Activated CD4-positive, alpha-beta T cell treated with anti-CD3 and anti-CD28 coated beads for 36 hours (primary cell): ENCODE measurements at regions of chr3 and their contacts with region 1.

Region 1: GRCh38 chr3:149969940-149970715 is 567 bp downstream of the PFN2 start:
- DNase-seq: peak; percentile 86
- ATAC-seq: peak; percentile 65
- H3K4me3 Mint-ChIP-seq: peak overlapping the region; percentile 83
- H3K27ac Mint-ChIP-seq: peak overlapping the region; percentile 51
- H3K4me1 Mint-ChIP-seq: peaks cover 14% of the 10 kb centered on the region
- H3K27me3 Mint-ChIP-seq: peaks cover 25% of the 10 kb centered on the region

Region 2: GRCh38 chr3:149752051-149752787 is 217.9 kb before region 1 on chr3 and contains the start of gene COMMD2:
- CTCF ChIA-PET with region 1: no interaction called
- POLR2A ChIA-PET with region 1: no interaction called
- intact Hi-C with region 1: loop called in 1 of 2 experiments (anchors 5 kb)
- DNase-seq: peak; percentile 88
- ATAC-seq: peak; percentile 100
- H3K4me3 Mint-ChIP-seq: peak within 1 kb of the TSS; percentile 95
- H3K27ac Mint-ChIP-seq: peak within 1 kb of the TSS; percentile 91
- H3K4me1 Mint-ChIP-seq: peaks cover 25% of the 10 kb centered on the region
- H3K27me3 Mint-ChIP-seq: no peaks in the 10 kb centered on the region
- total RNA-seq, gene COMMD2: 29.4 to 29.5 TPM

Region 3: DNA sequence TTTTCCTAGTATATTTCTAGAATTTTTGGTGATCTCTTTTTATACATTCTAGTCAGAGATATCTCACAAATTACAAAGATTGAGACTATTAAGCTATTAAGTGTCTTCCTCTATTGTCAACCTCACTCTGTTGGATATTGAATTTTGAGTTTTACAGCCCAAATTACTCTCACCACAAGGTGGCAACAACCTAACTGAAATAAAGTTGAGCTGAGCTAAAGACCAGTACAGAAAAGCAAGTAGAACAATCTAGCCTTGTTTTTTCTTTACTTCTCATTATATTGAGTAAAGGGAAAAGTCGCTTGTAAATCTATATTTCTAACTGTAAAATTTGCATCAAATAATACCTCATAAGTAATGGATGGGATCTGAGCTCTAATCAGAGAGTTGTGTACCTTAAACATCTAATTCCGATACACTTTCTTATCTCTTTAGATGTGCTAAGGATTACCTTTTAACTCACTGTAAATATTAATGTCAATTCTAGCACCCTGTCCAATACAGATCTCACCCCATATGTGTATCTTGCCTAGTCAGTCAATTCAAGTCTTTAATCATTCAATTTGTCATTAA is 204.3 kb before region 1 on chr3:
- CTCF ChIA-PET with region 1: no interaction called
- POLR2A ChIA-PET with region 1: no interaction called
- intact Hi-C with region 1: no loop called
- DNase-seq: no peak
- ATAC-seq: no peak
- H3K4me3 Mint-ChIP-seq: no peak overlapping the region
- H3K27ac Mint-ChIP-seq: no peak overlapping the region
- H3K4me1 Mint-ChIP-seq: no peaks in the 10 kb centered on the region
- H3K27me3 Mint-ChIP-seq: peaks cover 24% of the 10 kb centered on the region

Region 4: GRCh38 chr3:149936812-149937233 is 33.3 kb before region 1 on chr3:
- CTCF ChIA-PET with region 1: interaction called, 3 read pairs
- POLR2A ChIA-PET with region 1: no interaction called
- intact Hi-C with region 1: loop called in 1 of 2 experiments (anchors 2 kb)
- DNase-seq: peak; percentile 59
- ATAC-seq: peak; percentile 55
- H3K4me3 Mint-ChIP-seq: no peak overlapping the region
- H3K27ac Mint-ChIP-seq: no peak overlapping the region
- H3K4me1 Mint-ChIP-seq: peaks cover 18% of the 10 kb centered on the region
- H3K27me3 Mint-ChIP-seq: no peaks in the 10 kb centered on the region

Region 5: DNA sequence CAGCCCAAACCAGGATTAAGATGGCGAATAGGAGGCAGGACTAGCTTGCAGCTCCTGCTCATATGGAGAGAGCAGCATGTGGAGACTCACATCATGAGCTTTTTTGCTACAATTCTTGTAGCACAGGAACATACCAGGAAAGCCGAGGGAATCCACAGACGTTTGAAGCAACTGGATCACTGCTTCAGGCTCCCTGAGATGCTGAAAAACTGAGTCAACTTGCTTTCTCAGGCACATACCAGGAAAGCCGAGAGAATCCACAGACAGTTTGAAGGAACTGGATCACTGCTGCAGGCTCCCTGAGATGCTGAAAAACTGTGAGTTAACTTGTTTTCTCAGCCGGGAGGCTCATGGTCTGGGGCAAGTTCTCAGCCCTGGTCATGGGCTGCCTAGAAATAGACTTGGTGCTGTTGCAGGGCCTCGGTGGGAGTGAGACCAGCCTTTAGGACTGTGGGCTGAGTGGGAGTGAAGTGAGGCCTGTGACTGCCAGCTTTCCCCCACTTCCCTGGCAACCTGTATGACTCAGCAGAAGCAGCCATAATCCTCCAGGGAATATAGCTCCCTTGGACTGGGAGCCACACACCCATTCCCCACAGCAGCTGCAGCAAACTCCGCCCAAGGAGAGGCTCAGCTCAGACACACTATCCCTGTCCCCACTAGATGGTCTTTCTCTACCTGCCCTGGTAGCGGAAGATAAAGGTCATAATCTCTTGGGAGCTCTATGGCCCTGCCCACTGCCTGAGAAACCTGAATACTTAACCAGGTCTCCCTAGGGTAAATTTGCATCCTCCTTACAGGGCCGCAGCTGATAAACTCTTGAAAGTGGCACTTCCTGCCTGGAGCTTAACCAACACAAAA is 52.5 kb after region 1 on chr3:
- CTCF ChIA-PET with region 1: no interaction called
- POLR2A ChIA-PET with region 1: no interaction called
- intact Hi-C with region 1: no loop called
- DNase-seq: no peak
- ATAC-seq: no peak
- H3K4me3 Mint-ChIP-seq: no peak overlapping the region
- H3K27ac Mint-ChIP-seq: no peak overlapping the region
- H3K4me1 Mint-ChIP-seq: no peaks in the 10 kb centered on the region
- H3K27me3 Mint-ChIP-seq: peaks cover 33% of the 10 kb centered on the region

Region 6: DNA sequence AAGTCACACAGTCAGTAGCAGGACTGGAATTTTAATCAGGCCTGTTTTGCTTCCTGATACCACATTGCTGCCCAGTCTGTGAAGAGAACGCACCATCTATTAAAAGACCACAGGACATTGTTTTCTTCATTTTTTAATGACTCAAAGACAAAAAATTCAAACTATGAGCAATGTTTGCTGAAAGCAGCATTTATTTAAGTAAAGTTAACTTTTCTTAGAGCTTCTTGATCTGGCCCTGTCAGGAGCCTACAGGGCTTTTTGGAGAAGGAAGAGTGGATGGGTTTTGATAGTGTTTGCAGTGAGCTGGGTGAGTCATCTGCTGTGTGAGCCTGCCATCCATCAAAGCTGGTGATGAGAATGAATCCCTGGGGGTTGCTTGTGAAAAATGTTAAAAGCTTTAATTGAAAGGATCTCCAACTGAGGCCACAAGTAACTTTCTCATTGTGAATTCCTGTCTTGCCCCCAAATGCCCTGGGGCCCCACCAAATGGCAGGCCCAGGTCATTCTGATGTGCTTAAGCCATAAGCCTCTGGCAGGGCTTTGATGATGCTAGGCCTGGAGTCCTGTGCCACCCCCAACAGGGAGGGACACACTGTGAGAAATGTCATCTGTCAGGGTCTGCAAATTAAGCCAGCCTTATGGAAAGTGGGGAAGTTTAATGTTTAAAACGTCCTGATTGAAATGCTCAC is 136.8 kb after region 1 on chr3:
- CTCF ChIA-PET with region 1: no interaction called
- POLR2A ChIA-PET with region 1: no interaction called
- intact Hi-C with region 1: no loop called
- DNase-seq: no peak
- ATAC-seq: no peak
- H3K4me3 Mint-ChIP-seq: no peak overlapping the region
- H3K27ac Mint-ChIP-seq: no peak overlapping the region
- H3K4me1 Mint-ChIP-seq: peaks cover 7% of the 10 kb centered on the region
- H3K27me3 Mint-ChIP-seq: peaks cover 10% of the 10 kb centered on the region

Region 7: DNA sequence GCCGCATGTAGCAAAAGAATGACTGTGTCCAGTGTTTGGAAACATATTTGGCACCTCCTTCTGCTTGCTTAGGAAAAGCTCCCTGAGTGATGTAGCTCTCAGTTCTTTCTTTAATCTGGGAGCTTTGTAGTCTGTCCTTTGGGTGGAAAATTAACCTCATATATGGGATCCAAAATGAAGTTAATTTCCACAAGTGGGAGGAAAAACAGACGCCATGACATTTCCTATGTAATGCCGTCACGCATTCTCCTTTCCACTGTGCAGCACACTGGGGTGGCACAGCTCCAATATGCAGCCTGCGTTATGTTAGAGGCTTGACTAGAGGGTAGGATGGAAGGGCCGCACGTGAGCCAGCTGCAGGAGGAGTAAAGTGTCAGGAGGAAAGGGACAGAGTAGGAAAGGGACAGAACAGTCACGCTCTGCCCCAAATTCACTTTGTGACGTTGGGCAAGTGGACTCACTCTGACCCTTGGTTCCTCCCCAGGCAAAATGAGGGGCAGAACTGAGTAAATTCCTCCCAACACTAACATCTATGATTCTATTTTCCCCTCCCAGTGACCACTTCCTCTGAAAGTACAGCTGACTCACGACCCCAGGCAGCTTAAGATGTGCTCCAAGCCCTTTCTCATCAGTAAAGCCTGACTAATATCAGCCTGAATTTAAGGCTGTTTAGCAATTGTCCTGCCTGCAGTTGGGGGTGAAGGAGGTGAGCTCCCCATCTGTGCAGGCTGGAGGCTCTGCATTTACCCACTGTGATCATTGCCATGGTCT is 177.0 kb after region 1 on chr3:
- CTCF ChIA-PET with region 1: interaction called, 13 read pairs
- POLR2A ChIA-PET with region 1: no interaction called
- intact Hi-C with region 1: no loop called
- DNase-seq: peak; percentile 27
- ATAC-seq: peak; percentile 80
- H3K4me3 Mint-ChIP-seq: no peak overlapping the region
- H3K27ac Mint-ChIP-seq: no peak overlapping the region
- H3K4me1 Mint-ChIP-seq: no peaks in the 10 kb centered on the region
- H3K27me3 Mint-ChIP-seq: peaks cover 14% of the 10 kb centered on the region

Region 8: DNA sequence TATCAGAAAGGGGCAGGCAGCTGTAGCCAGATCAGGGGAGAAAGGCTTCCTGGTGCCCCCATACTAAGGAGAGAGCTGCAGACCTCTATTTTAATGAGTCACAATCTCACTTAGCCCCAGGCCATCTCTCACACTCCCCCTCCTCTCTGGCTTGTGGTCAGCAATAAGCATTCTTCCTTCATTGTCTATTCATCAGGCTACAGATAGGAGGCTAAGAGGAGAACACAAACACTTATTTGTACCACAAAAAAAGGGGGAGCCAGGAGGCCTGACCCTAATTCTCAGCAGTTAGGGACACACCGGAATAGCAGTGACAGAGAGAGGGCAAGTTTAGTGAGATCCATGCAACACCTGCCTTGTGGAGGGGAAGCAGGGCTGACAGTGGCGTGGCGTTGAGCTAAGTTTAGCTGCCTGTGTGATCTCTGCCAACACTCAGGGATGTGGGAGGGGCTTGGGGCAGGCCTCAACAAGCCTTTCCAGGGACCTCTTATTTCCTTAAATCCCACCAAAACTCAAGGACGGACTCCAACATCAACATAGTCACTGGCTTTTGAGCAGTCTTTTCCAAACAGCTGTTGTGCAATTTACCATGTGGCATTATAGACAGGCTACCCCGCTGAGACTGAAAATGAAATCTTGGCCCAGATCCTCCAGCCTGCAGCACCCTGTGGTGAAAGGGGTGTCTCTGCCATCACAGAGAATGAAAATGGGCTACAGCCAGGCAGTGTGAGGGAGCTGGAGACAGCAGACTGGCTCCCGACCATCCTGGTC is 246.1 kb after region 1 on chr3:
- CTCF ChIA-PET with region 1: interaction called, 47 read pairs
- POLR2A ChIA-PET with region 1: no interaction called
- intact Hi-C with region 1: loop called (anchors 1 to 2 kb)
- DNase-seq: no peak
- ATAC-seq: no peak
- H3K4me3 Mint-ChIP-seq: no peak overlapping the region
- H3K27ac Mint-ChIP-seq: no peak overlapping the region
- H3K4me1 Mint-ChIP-seq: peaks cover 1% of the 10 kb centered on the region
- H3K27me3 Mint-ChIP-seq: peaks cover 23% of the 10 kb centered on the region

Region 9: DNA sequence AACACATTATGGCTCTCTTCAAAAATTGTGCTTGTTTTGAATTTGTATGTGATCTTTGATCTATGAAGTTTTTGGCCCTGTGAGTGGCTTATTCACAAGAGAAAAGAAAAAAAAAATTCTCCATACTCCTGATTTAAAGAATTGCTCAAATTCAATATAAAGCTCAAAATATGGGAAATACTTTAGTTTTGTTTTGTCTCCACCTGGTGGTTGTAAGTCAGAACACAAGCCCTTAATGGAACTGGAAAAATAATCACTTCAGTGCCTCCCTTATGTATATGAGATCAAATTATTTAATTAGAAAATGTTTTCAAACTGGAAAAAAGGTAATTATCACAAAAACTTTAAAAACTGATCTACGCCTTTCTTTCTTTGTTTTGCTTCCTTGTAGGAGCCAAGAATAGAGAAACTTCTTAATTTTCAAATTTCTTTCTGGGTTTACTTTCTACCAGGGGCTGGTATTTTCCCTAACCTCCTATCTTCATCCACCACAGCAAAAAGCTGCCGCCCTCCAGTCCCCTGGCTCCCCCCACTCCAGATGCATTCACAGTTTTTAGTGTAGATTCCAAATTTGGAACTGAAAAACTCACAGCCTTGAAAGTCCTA is 525.5 kb after region 1 on chr3:
- CTCF ChIA-PET with region 1: interaction called, 4 read pairs
- POLR2A ChIA-PET with region 1: no interaction called
- intact Hi-C with region 1: loop called in 1 of 2 experiments (anchors 2 kb)
- DNase-seq: no peak
- ATAC-seq: no peak
- H3K4me3 Mint-ChIP-seq: no peak overlapping the region
- H3K27ac Mint-ChIP-seq: no peak overlapping the region
- H3K4me1 Mint-ChIP-seq: no peaks in the 10 kb centered on the region
- H3K27me3 Mint-ChIP-seq: no peaks in the 10 kb centered on the region